ENCODE measurements at regions of chr15 and their contacts with region 1.

Region 1: GRCh38 chr15:56869573-56869972 is 48.9 kb upstream of the TCF12 start:
- DNase-seq: no peak
- CTCF ChIP-seq: peak; percentile 49

Region 2: DNA sequence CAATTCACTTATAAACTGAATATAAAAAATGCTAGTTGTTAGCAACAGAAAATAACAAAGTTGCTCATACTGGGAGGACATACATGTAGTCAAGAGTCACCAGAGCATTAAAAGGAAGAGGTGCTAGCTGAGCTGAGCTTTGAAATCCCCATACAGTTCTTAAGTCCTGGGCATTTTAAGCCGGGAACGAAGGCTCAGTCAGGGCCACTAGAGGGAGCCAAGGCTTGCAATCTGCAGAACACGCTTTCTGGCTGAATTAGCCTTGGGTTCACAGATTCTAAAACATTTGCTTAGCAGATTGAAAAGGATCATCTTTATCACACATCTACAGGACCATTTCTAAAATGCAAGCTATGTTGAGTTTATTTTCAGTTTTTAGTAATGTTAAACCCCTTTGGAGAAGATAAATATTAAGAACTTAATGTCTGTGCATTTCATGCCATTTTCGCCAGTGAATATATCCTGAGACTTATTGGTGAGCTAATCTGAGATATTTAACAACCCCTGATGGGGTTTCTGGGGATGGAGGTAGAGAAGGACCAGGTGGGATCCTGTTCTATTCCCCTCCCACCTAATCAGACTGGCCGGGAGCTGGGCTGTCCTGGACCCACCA is 378.4 kb before region 1 on chr15:
- CTCF ChIA-PET with region 1: interaction called, 70 read pairs
- POLR2A ChIA-PET with region 1: no interaction called
- DNase-seq: peak; percentile 73
- CTCF ChIP-seq: peak; percentile 93

Region 3: GRCh38 chr15:56496635-56497034 is 372.9 kb before region 1 on chr15:
- CTCF ChIA-PET with region 1: interaction called, 70 read pairs
- POLR2A ChIA-PET with region 1: no interaction called
- DNase-seq: peak; percentile 63
- CTCF ChIP-seq: peak; percentile 70

Region 4: DNA sequence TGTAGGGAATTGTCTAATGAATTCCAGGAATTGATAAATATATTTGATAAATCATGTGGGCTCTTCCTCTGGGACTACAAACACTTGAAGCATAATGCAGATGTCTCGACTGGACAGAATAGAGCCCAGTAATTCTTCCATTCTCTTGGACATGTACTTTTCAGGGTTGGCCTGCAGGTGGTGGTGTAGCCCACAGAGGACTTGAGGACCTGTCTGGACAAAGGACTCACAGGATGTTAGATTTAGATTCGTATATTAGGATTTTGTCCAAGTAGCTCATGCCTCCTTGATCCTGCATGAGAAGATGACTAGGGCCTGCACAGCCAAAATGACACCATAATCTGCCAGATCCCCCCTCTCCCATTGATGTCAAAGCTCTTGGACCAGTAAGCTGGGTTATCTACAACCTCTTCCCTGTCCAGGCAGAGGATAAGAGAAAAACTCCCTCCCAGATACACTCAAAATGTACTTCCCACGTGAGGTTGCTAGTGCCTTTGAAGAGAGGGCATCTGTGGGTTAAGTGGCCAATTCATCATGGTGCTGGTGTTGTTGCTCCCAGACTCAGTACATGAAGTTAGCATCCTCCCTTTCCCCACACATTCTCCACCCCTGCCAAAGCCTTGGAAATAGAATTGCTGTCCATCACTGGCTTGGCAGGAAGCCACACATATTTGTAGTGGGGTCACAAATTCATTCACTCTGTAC is 47.7 kb before region 1 on chr15:
- CTCF ChIA-PET with region 1: interaction called, 14 read pairs
- POLR2A ChIA-PET with region 1: no interaction called
- DNase-seq: peak; percentile 43
- CTCF ChIP-seq: peak; percentile 63

Measured in GM10248 (cell line).